ENCODE measurements at regions of chr6 and their contacts with region 1.

Region 1: DNA sequence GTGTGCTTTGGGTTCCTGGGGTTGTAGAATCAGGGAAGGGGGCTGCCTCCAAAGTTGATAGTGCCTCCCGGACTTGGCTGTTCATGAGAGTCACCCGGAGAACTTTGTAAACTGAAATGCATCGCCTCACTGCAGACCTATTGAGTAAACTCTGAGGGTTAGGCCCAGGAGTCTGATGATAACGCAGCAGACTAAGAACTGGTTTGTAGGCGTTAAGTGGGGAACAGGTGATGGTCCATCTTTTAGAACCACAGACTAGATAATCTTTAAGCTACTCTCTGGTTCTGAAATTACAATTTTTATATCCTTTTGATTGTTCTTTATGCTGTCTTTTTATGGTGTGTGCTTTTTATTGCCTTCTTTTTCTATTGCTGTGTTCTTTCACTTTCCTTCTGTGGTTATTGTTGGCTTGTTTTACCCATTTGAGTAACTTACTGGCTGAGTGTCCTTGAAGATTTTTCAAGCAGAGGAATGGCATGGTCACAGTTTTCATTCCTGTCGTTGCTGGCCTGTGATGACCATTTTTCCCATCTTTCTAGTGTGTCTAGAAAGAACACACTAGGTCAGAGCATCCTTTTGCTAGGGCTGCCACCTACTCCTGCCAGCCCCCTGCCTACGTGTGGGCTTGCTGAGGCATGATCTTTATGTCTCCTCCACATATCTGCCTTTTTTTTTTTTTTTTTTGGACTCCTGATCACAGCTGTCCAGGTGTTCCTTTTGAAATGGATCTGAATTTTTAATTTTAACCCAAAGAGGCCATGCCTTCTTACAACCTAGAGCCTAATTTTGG is 30.9 kb downstream of the LRRC1 start:
- DNase-seq: no peak
- H3K4me3 ChIP-seq: no peak overlapping the region
- H3K27ac ChIP-seq: no peak overlapping the region
- H3K27me3 ChIP-seq: no peaks in the 10 kb centered on the region
- CTCF ChIP-seq: no peak

Region 2: DNA sequence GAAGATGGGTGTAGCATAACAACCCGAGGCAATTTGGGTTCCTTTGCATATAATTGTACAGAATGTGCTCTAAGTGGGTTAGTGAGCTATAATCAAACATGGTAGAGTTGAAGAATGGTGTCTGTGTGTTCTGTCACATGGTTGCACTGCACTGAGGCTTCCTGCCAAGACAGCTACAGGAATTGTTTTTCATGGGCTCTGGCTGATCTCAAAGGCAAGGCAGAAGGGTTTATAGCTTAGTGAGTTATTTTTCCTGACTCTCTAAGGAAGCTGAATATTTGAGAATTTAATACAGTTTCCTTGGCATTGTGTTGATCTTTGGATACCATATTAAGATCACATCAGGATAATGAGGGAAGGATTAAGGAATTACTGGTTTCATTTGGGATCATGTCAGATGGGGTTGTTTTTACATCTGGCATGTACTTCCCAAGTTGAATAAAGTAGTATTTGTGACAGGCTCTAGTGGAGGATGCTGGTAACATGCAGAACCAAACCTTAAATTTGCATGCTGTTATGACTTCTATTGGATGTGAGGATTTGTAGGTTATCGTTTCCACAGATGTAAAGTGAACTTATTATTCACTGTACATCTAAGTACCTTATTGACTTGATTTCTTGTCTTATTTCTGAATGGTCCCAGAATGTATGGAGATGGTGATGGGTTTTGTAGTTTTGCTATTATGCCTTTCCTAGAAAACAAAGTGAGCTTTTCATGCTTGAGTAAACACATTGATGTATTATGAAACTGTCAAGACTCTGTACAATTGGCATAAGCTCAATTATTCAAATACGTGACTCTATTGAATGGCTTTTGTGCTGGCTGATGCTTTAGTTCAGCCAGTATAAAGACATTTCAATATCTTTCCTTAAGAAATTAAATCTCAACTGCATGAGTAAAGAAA is 12.4 kb after region 1 on chr6:
- CTCF ChIA-PET with region 1: interaction called, 10 read pairs
- POLR2A ChIA-PET with region 1: no interaction called
- DNase-seq: no peak
- H3K4me3 ChIP-seq: no peak overlapping the region
- H3K27ac ChIP-seq: no peak overlapping the region
- H3K27me3 ChIP-seq: no peaks in the 10 kb centered on the region
- CTCF ChIP-seq: no peak

Region 3: DNA sequence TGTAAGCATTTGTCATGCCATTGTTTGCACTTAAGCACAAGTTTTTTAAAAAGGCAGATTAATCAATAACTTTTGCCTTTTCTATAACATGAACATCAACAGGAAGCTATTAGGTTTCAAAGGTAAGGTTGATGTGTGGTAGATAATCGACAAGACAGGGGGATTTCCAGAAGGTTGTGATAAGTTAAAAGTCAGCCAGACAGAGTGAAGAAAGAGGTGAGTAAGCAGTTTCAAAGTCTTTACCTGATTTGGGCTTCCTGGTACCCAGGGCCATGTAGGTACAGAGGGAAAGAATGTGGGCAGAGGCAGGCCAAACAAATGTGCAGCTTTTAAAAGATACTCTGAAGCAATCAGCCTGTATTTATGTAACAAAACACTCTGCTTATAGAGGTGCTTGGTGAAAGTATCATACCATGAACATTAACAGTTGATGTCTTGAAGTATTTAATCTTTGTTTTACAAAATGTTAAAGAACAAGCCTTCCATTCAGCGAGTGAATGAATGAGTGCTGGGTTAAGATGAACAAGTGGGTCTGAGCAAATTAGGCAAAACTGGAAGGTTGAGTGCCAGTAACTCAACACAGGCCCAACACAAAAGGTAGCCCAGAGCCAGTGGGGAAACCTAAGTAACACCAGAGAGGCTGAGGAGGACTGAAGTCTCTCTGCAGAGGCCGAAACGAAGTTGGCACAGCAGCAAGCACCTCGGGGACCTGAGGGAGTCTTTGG is 29.3 kb after region 1 on chr6:
- CTCF ChIA-PET with region 1: no interaction called
- POLR2A ChIA-PET with region 1: no interaction called
- DNase-seq: no peak
- H3K4me3 ChIP-seq: no peak overlapping the region
- H3K27ac ChIP-seq: no peak overlapping the region
- H3K27me3 ChIP-seq: no peaks in the 10 kb centered on the region
- CTCF ChIP-seq: no peak

Measured in AG04450 (cell line).